ENCODE measurements at regions of chr2 and their contacts with region 1.

Region 1: DNA sequence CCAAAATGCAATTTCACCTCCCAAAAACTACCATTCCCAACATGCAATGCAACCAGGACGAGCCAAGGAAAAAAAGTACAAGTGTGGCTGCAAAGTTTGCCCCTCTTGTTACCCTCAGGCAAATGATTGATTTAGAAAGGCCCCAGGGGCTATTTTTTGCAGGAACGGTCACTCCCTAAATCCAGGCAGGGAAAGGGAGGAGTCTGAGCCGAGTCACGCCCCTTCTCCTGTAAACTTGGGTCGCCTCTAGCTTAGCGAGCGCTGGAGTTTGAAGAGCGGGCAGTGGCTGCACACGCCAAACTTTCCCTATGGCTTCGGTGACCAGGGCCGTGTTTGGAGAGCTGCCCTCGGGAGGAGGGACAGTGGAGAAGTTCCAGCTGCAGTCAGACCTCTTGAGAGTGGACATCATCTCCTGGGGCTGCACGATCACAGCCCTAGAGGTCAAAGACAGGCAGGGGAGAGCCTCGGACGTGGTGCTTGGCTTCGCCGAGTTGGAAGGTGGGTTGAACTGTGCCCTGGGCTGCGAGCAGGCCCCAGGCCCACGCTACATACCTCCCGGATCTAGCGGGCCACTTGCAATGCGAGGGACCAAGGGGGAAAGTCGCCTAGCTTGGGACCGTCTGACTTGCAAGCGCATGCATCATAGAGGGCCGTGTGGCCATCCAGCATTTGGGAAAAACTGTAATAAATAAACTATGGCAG is at the start of gene GALM:
- DNase-seq: peak; percentile 51
- H3K4me3 Mint-ChIP-seq: peak within 1 kb of the TSS; percentile 88
- H3K27ac Mint-ChIP-seq: peak within 1 kb of the TSS; percentile 96
- H3K4me1 Mint-ChIP-seq: peaks cover 64% of the 10 kb centered on the region
- H3K27me3 Mint-ChIP-seq: no peaks in the 10 kb centered on the region
- total RNA-seq, gene GALM: 42.1 and 43.0 TPM in 2 replicates

Region 2: GRCh38 chr2:38602732-38603401 is 63.1 kb before region 1 on chr2 and contains the start of gene HNRNPLL:
- intact Hi-C with region 1: loop called (anchors 1 kb)
- DNase-seq: peak; percentile 95
- H3K4me3 Mint-ChIP-seq: peak within 1 kb of the TSS; percentile 90
- H3K27ac Mint-ChIP-seq: peak within 1 kb of the TSS; percentile 91
- H3K4me1 Mint-ChIP-seq: peaks cover 59% of the 10 kb centered on the region
- H3K27me3 Mint-ChIP-seq: no peaks in the 10 kb centered on the region
- total RNA-seq, gene HNRNPLL: 65.7 and 67.7 TPM in 2 replicates

Region 3: GRCh38 chr2:38619458-38620164 is 46.4 kb before region 1 on chr2:
- intact Hi-C with region 1: loop called (anchors 1 kb)
- DNase-seq: no peak
- H3K4me3 Mint-ChIP-seq: no peak overlapping the region
- H3K27ac Mint-ChIP-seq: peak overlapping the region; percentile 19
- H3K4me1 Mint-ChIP-seq: peaks cover 53% of the 10 kb centered on the region
- H3K27me3 Mint-ChIP-seq: no peaks in the 10 kb centered on the region

Region 4: DNA sequence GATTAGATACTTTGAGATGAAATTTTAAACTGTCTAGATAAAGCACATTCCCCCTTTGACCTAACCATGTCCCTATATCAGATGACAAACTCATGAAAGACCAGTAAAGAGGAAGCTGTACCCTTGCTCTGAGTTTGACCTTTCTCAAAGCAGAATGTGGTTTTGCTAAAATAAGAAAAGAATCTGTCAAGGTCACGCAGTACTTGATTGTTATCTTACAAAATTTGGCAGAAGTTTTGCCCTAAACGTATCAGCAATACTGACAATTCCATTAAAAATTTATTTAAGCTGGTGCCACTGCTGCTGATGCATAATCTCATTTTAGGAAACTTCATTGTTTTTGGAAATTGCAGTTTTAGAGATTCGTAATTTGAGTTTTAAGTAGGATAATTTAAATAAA is 31.3 kb before region 1 on chr2:
- intact Hi-C with region 1: loop called (anchors 1 kb)
- DNase-seq: no peak
- H3K4me3 Mint-ChIP-seq: peak overlapping the region; percentile 8
- H3K27ac Mint-ChIP-seq: peak overlapping the region; percentile 21
- H3K4me1 Mint-ChIP-seq: peaks cover 50% of the 10 kb centered on the region
- H3K27me3 Mint-ChIP-seq: no peaks in the 10 kb centered on the region

Region 5: GRCh38 chr2:38682008-38682575 is 16.1 kb after region 1 on chr2:
- intact Hi-C with region 1: loop called (anchors 1 kb)
- DNase-seq: no peak
- H3K4me3 Mint-ChIP-seq: peak overlapping the region; percentile 58
- H3K27ac Mint-ChIP-seq: peak overlapping the region; percentile 81
- H3K4me1 Mint-ChIP-seq: peaks cover 54% of the 10 kb centered on the region
- H3K27me3 Mint-ChIP-seq: no peaks in the 10 kb centered on the region

Region 6: DNA sequence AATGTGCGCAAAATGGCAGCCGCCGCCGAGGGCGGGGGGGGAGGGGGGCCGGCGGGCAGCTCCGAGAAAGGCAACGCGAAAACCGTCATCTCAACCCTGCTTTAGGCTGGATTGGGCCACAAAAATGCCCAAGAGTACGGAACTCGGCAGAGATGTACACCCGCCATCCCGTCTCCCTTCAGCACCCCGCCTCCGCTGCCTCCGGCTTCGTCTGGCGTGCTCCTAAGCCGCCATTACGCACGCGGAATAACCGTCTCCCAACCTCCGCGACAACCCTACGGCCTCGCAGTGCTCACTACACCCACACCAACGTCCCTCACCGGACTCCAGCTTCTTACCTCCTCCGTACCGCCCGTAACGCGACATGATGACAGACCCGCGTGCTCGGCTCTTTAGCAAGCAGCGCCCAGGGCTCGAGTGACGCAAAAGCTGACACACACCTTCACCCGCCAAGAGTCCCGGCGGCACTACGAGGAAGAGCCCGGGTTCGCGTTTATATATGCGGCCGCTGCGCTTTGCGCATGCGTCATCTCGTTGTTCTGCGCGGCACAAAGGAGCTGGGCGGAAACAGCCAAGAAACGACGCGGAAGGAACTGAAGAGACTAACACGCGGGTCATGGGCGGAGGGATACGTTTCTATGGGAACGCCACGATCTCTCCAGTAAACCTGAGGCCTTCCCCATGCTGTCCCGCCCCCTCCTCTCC is 85.0 kb after region 1 on chr2 and contains the start of gene SRSF7:
- intact Hi-C with region 1: loop called (anchors 1 kb)
- DNase-seq: peak; percentile 97
- H3K4me3 Mint-ChIP-seq: peak within 1 kb of the TSS; percentile 98
- H3K27ac Mint-ChIP-seq: peak within 1 kb of the TSS; percentile 100
- H3K4me1 Mint-ChIP-seq: peaks cover 53% of the 10 kb centered on the region
- H3K27me3 Mint-ChIP-seq: no peaks in the 10 kb centered on the region
- total RNA-seq, gene SRSF7: 401 and 406 TPM in 2 replicates

Measured in activated T-helper 2 cell treated with anti-CD3 and anti-CD28 coated beads, Interferon-gamma antibody, Interleukin-2, Interleukin-4, amounts not matched to agents 10 μg/mL and 5 μg/mL and 100 μg/mL, durations not matched to agents 14 hours and 24 hours and 36 hours (primary cell).